ENCODE measurements at regions of chr14 and their contacts with region 1.

Region 1: GRCh38 chr14:65281991-65282895 is 130.3 kb upstream of the FUT8 start:
- DNase-seq: peak; percentile 47
- ATAC-seq: peak; percentile 11
- H3K4me3 ChIP-seq: peak overlapping the region in 4 of 5 experiments; percentile 1 to 54 (median 38)
- H3K4me3 Mint-ChIP-seq: peak overlapping the region; percentile 85
- H3K27ac ChIP-seq: peak overlapping the region; percentile 60 to 83
- H3K27ac Mint-ChIP-seq: peak overlapping the region; percentile 91
- H3K4me1 ChIP-seq: peaks cover 47 to 48% of the 10 kb centered on the region in 2 donors
- H3K4me1 Mint-ChIP-seq: peaks cover 58% of the 10 kb centered on the region
- H3K27me3 ChIP-seq: no peaks in the 10 kb centered on the region
- H3K27me3 Mint-ChIP-seq: no peaks in the 10 kb centered on the region
- CTCF ChIP-seq: no peak

Region 2: GRCh38 chr14:64026600-64026999 is 1255.6 kb before region 1 on chr14:
- CTCF ChIA-PET with region 1: no interaction called
- POLR2A ChIA-PET with region 1: no interaction called
- intact Hi-C with region 1: no loop called
- DNase-seq: no peak
- ATAC-seq: no peak
- H3K4me3 ChIP-seq: no peak overlapping the region
- H3K4me3 Mint-ChIP-seq: no peak overlapping the region
- H3K27ac ChIP-seq: no peak overlapping the region
- H3K27ac Mint-ChIP-seq: no peak overlapping the region
- H3K4me1 ChIP-seq: no peaks in the 10 kb centered on the region
- H3K4me1 Mint-ChIP-seq: no peaks in the 10 kb centered on the region
- H3K27me3 ChIP-seq: no peaks in the 10 kb centered on the region
- H3K27me3 Mint-ChIP-seq: no peaks in the 10 kb centered on the region
- CTCF ChIP-seq: no peak

Region 3: DNA sequence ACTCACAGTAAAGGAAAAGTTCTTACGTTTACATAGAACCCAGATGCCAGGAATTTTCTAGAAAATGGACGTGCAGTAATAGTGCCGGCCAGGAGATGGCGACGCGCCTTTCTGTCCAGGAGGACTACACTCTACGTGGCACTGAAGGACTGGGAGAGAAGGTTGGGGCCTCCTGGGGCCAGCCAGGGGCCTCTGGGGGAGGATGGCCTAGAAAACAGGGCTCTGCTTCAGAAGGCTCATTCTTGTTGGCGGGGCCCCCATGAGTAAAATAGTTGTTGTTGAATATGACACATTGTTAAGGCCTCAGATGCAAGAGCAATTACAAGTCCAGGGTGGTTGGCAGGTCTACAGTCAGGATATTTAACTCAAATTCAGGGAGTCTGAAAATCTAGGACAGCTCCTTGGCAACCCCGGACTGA is 59.8 kb before region 1 on chr14:
- CTCF ChIA-PET with region 1: interaction called, 75 read pairs
- POLR2A ChIA-PET with region 1: no interaction called
- intact Hi-C with region 1: no loop called
- DNase-seq: peak; percentile 72
- ATAC-seq: peak; percentile 89
- H3K4me3 ChIP-seq: no peak overlapping the region
- H3K4me3 Mint-ChIP-seq: no peak overlapping the region
- H3K27ac ChIP-seq: no peak overlapping the region
- H3K27ac Mint-ChIP-seq: peak overlapping the region; percentile 39
- H3K4me1 ChIP-seq: peaks cover 42 to 56% of the 10 kb centered on the region in 2 donors
- H3K4me1 Mint-ChIP-seq: peaks cover 49% of the 10 kb centered on the region
- H3K27me3 ChIP-seq: no peaks in the 10 kb centered on the region
- H3K27me3 Mint-ChIP-seq: no peaks in the 10 kb centered on the region
- CTCF ChIP-seq: peak; percentile 87

Region 4: GRCh38 chr14:65239143-65239937 is 42.9 kb before region 1 on chr14:
- CTCF ChIA-PET with region 1: no interaction called
- POLR2A ChIA-PET with region 1: no interaction called
- intact Hi-C with region 1: no loop called
- DNase-seq: no peak
- ATAC-seq: no peak
- H3K4me3 ChIP-seq: no peak overlapping the region
- H3K4me3 Mint-ChIP-seq: no peak overlapping the region
- H3K27ac ChIP-seq: no peak overlapping the region
- H3K27ac Mint-ChIP-seq: peak overlapping the region; percentile 38
- H3K4me1 ChIP-seq: peaks cover 10 to 12% of the 10 kb centered on the region in 2 donors
- H3K4me1 Mint-ChIP-seq: peaks cover 5% of the 10 kb centered on the region
- H3K27me3 ChIP-seq: no peaks in the 10 kb centered on the region
- H3K27me3 Mint-ChIP-seq: no peaks in the 10 kb centered on the region
- CTCF ChIP-seq: no peak

Region 5: DNA sequence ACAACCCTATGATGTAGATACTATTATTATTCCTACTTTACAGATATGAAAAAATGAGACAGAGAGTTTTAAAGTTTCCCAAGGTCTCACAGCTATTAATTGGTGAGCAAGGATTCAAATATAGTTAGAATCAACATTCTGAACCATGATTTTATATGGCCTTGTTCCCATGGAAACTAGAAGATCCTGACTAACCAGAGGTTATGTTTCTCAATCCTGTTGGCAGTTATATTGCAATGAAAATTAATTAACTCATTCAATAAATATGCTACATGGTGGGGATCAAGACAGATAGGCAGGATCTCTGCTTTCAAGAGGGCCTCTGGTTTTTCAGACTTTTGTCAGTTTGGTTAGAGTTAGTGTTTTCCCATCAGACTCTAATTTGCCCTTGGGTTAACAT is 121.0 kb after region 1 on chr14:
- CTCF ChIA-PET with region 1: no interaction called
- POLR2A ChIA-PET with region 1: no interaction called
- intact Hi-C with region 1: no loop called
- DNase-seq: no peak
- ATAC-seq: no peak
- H3K4me3 ChIP-seq: no peak overlapping the region
- H3K4me3 Mint-ChIP-seq: no peak overlapping the region
- H3K27ac ChIP-seq: no peak overlapping the region
- H3K27ac Mint-ChIP-seq: no peak overlapping the region
- H3K4me1 ChIP-seq: no peaks in the 10 kb centered on the region
- H3K4me1 Mint-ChIP-seq: peaks cover 2% of the 10 kb centered on the region
- H3K27me3 ChIP-seq: no peaks in the 10 kb centered on the region
- H3K27me3 Mint-ChIP-seq: no peaks in the 10 kb centered on the region
- CTCF ChIP-seq: no peak

Region 6: GRCh38 chr14:66568220-66568619 is 1286.0 kb after region 1 on chr14:
- CTCF ChIA-PET with region 1: no interaction called
- POLR2A ChIA-PET with region 1: no interaction called
- intact Hi-C with region 1: no loop called
- DNase-seq: no peak
- ATAC-seq: no peak
- H3K4me3 ChIP-seq: no peak overlapping the region
- H3K4me3 Mint-ChIP-seq: no peak overlapping the region
- H3K27ac ChIP-seq: no peak overlapping the region
- H3K27ac Mint-ChIP-seq: no peak overlapping the region
- H3K4me1 ChIP-seq: no peaks in the 10 kb centered on the region
- H3K4me1 Mint-ChIP-seq: peaks cover 3% of the 10 kb centered on the region
- H3K27me3 ChIP-seq: no peaks in the 10 kb centered on the region
- H3K27me3 Mint-ChIP-seq: no peaks in the 10 kb centered on the region
- CTCF ChIP-seq: no peak